ENCODE measurements at regions of chr13 and their contacts with region 1.

Region 1: GRCh38 chr13:75694722-75695121 is 58.6 kb downstream of the LMO7 start:
- DNase-seq: no peak
- ATAC-seq: no peak
- H3K4me3 ChIP-seq: no peak overlapping the region
- H3K27ac ChIP-seq: no peak overlapping the region
- H3K4me1 ChIP-seq: no peaks in the 10 kb centered on the region
- H3K27me3 ChIP-seq: no peaks in the 10 kb centered on the region
- CTCF ChIP-seq: no peak
- EP300 ChIP-seq: no peak
- POLR2A ChIP-seq: no peak
- RAD21 ChIP-seq: no peak

Region 2: GRCh38 chr13:75675421-75675820 is 19.3 kb before region 1 on chr13:
- CTCF ChIA-PET with region 1: interaction called, 43 read pairs
- POLR2A ChIA-PET with region 1: no interaction called
- RAD21 ChIA-PET with region 1: interaction called, 12 read pairs
- SMC1A ChIA-PET with region 1: interaction called, 11 read pairs
- in situ Hi-C with region 1: no loop called
- intact Hi-C with region 1: no loop called
- DNase-seq: no peak
- ATAC-seq: no peak
- H3K4me3 ChIP-seq: no peak overlapping the region
- H3K27ac ChIP-seq: no peak overlapping the region
- H3K4me1 ChIP-seq: no peaks in the 10 kb centered on the region
- H3K27me3 ChIP-seq: no peaks in the 10 kb centered on the region
- CTCF ChIP-seq: no peak
- EP300 ChIP-seq: no peak
- POLR2A ChIP-seq: no peak
- RAD21 ChIP-seq: no peak

Region 3: GRCh38 chr13:75739244-75739868 is 44.6 kb after region 1 on chr13:
- CTCF ChIA-PET with region 1: interaction called, 9 read pairs
- POLR2A ChIA-PET with region 1: no interaction called
- RAD21 ChIA-PET with region 1: interaction called, 8 read pairs
- SMC1A ChIA-PET with region 1: interaction called, 13 read pairs
- in situ Hi-C with region 1: no loop called
- intact Hi-C with region 1: no loop called
- DNase-seq: peak; percentile 24
- ATAC-seq: peak; percentile 73
- H3K4me3 ChIP-seq: peak overlapping the region; percentile 10; the same call in 1 of the 2 replicates
- H3K27ac ChIP-seq: peak overlapping the region; percentile 80
- H3K4me1 ChIP-seq: peaks cover 19% of the 10 kb centered on the region
- H3K27me3 ChIP-seq: no peaks in the 10 kb centered on the region
- CTCF ChIP-seq: no peak
- EP300 ChIP-seq: no peak
- POLR2A ChIP-seq: no peak
- RAD21 ChIP-seq: no peak

Region 4: GRCh38 chr13:75803164-75803611 is 108.5 kb after region 1 on chr13:
- CTCF ChIA-PET with region 1: interaction called, 76 read pairs
- POLR2A ChIA-PET with region 1: interaction called, 3 read pairs
- RAD21 ChIA-PET with region 1: interaction called, 61 read pairs
- SMC1A ChIA-PET with region 1: interaction called, 64 read pairs
- in situ Hi-C with region 1: no loop called
- intact Hi-C with region 1: loop called (anchors 5 kb)
- DNase-seq: no peak
- ATAC-seq: peak; percentile 33
- H3K4me3 ChIP-seq: no peak overlapping the region
- H3K27ac ChIP-seq: peak overlapping the region; percentile 38
- H3K4me1 ChIP-seq: no peaks in the 10 kb centered on the region
- H3K27me3 ChIP-seq: no peaks in the 10 kb centered on the region
- CTCF ChIP-seq: no peak
- EP300 ChIP-seq: no peak
- POLR2A ChIP-seq: no peak
- RAD21 ChIP-seq: no peak

Region 5: DNA sequence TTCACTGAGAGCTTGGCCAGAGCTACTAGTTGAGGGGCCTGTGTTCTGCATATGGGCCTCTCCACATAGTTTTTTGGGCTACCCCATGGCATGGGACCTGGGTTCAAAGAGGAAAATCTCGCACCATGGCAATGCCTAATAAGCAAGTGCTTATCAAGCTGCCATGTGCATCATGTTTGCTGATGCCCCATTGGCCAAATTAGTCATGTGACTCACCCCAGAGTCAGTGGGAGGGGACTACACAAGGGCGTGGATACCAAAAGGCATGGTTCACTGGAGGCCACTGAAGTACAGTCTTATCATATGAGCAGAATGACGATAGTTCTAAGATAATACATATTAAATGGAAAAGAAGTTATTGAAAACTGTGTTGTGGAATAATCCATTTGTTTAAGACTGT is 156.2 kb after region 1 on chr13:
- CTCF ChIA-PET with region 1: interaction called, 16 read pairs
- POLR2A ChIA-PET with region 1: interaction called, 3 read pairs
- RAD21 ChIA-PET with region 1: no interaction called
- SMC1A ChIA-PET with region 1: interaction called, 19 read pairs
- in situ Hi-C with region 1: no loop called
- intact Hi-C with region 1: no loop called
- DNase-seq: no peak
- ATAC-seq: no peak
- H3K4me3 ChIP-seq: no peak overlapping the region
- H3K27ac ChIP-seq: no peak overlapping the region
- H3K4me1 ChIP-seq: no peaks in the 10 kb centered on the region; the same call in 1 of the 2 replicates
- H3K27me3 ChIP-seq: no peaks in the 10 kb centered on the region
- CTCF ChIP-seq: no peak
- EP300 ChIP-seq: no peak
- POLR2A ChIP-seq: no peak
- RAD21 ChIP-seq: no peak

Region 6: GRCh38 chr13:75876360-75877050 is 181.8 kb after region 1 on chr13:
- CTCF ChIA-PET with region 1: interaction called, 296 read pairs
- POLR2A ChIA-PET with region 1: no interaction called
- RAD21 ChIA-PET with region 1: interaction called, 184 read pairs
- SMC1A ChIA-PET with region 1: interaction called, 228 read pairs
- in situ Hi-C with region 1: no loop called
- intact Hi-C with region 1: no loop called
- DNase-seq: peak; percentile 23
- ATAC-seq: peak; percentile 97
- H3K4me3 ChIP-seq: no peak overlapping the region
- H3K27ac ChIP-seq: no peak overlapping the region
- H3K4me1 ChIP-seq: no peaks in the 10 kb centered on the region
- H3K27me3 ChIP-seq: no peaks in the 10 kb centered on the region
- CTCF ChIP-seq: peak; percentile 94 to 95 (median 94)
- EP300 ChIP-seq: no peak
- POLR2A ChIP-seq: no peak
- RAD21 ChIP-seq: peak; percentile 99

Region 7: DNA sequence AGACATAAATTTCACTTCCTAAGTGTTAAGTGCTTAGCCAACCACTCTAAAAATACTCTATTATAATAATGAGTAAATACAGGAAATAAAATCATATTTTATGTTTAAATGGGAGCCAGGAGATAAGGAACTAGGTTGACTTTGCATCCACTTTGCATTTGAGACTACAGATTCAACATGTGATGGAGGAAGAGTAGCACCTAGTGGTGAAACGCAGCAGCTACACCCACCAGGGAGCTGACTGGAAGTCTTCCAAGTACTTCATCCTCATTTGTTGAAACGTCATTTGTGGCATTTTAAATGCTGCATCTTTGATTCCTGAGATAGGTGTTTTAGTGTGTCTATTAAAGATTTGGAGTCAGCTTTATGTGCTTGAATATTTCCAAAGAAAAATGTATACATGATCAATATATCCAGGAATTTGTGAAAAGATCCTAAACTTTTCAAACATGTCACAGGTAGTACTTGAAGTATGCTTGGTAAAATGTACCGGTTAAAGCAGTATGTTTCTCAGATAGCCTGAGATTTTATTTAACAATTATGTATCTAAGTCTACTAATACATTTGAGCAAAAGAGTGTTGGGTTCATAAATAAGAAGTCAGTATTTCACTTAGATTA is 1208.9 kb after region 1 on chr13:
- CTCF ChIA-PET with region 1: interaction called, 11 read pairs
- POLR2A ChIA-PET with region 1: no interaction called
- RAD21 ChIA-PET with region 1: interaction called, 10 read pairs
- SMC1A ChIA-PET with region 1: interaction called, 8 read pairs
- in situ Hi-C with region 1: loop called (anchors 10 kb)
- intact Hi-C with region 1: loop called (anchors 5 kb)
- DNase-seq: peak; percentile 25
- ATAC-seq: peak; percentile 91
- H3K4me3 ChIP-seq: no peak overlapping the region
- H3K27ac ChIP-seq: no peak overlapping the region
- H3K4me1 ChIP-seq: no peaks in the 10 kb centered on the region
- H3K27me3 ChIP-seq: no peaks in the 10 kb centered on the region; a peak in 1 of 4 replicates
- CTCF ChIP-seq: peak; percentile 95 to 100 (median 98)
- EP300 ChIP-seq: no peak
- POLR2A ChIP-seq: no peak
- RAD21 ChIP-seq: peak; percentile 99